Activated CD4-positive, alpha-beta T cell treated with anti-CD3 and anti-CD28 coated beads for 36 hours (primary cell): ENCODE measurements at regions of chrX and their contacts with region 1.

Region 1: GRCh38 chrX:54182864-54183608 is at the start of gene FAM120C:
- DNase-seq: peak; percentile 80
- ATAC-seq: peak; percentile 73
- H3K4me3 Mint-ChIP-seq: peak within 1 kb of the TSS; percentile 81
- H3K27ac Mint-ChIP-seq: peak within 1 kb of the TSS; percentile 87
- H3K4me1 Mint-ChIP-seq: peaks cover 39% of the 10 kb centered on the region
- H3K27me3 Mint-ChIP-seq: no peaks in the 10 kb centered on the region
- total RNA-seq, gene FAM120C: 6.6 to 8.3 TPM

Region 2: GRCh38 chrX:53422086-53422860 is 760.8 kb before region 1 on chrX and contains the start of gene SMC1A:
- CTCF ChIA-PET with region 1: no interaction called
- POLR2A ChIA-PET with region 1: interaction called, 3 read pairs
- intact Hi-C with region 1: loop called in 1 of 2 experiments (anchors 5 kb)
- DNase-seq: peak; percentile 96
- ATAC-seq: peak; percentile 91
- H3K4me3 Mint-ChIP-seq: peak within 1 kb of the TSS; percentile 94
- H3K27ac Mint-ChIP-seq: peak within 1 kb of the TSS; percentile 97
- H3K4me1 Mint-ChIP-seq: peaks cover 27% of the 10 kb centered on the region
- H3K27me3 Mint-ChIP-seq: no peaks in the 10 kb centered on the region
- total RNA-seq, gene SMC1A: 155 to 190 TPM

Region 3: GRCh38 chrX:53714580-53715345 is 468.3 kb before region 1 on chrX:
- CTCF ChIA-PET with region 1: no interaction called
- POLR2A ChIA-PET with region 1: interaction called, 3 read pairs
- intact Hi-C with region 1: loop called in 1 of 2 experiments (anchors 10 kb)
- DNase-seq: peak; percentile 77
- ATAC-seq: peak; percentile 74
- H3K4me3 Mint-ChIP-seq: peak overlapping the region; percentile 86
- H3K27ac Mint-ChIP-seq: peak overlapping the region; percentile 96
- H3K4me1 Mint-ChIP-seq: peaks cover 37% of the 10 kb centered on the region
- H3K27me3 Mint-ChIP-seq: no peaks in the 10 kb centered on the region

Region 4: DNA sequence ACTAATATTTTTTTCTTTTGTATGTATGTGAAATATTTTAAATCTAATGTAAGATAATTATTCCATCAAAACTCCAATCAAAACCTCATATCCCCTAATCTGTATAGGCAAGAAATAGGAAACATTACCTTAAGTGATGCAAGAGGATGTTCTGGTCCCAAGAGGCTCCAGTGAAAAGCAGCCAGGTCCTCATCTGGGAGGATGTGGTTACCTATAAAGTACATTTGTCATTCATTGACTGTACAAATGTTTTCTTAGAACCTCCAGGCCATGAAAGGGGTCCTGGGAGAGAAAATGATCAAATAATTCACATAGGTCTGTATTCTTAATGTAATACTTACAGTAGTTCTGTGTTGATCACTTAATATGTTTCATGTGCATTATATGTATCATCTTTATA is 25.5 kb before region 1 on chrX:
- CTCF ChIA-PET with region 1: no interaction called
- POLR2A ChIA-PET with region 1: no interaction called
- intact Hi-C with region 1: no loop called
- DNase-seq: no peak
- ATAC-seq: no peak
- H3K4me3 Mint-ChIP-seq: no peak overlapping the region
- H3K27ac Mint-ChIP-seq: no peak overlapping the region
- H3K4me1 Mint-ChIP-seq: no peaks in the 10 kb centered on the region
- H3K27me3 Mint-ChIP-seq: no peaks in the 10 kb centered on the region

Region 5: GRCh38 chrX:54439967-54440871 is 257.2 kb after region 1 on chrX and contains the start of gene TSR2:
- CTCF ChIA-PET with region 1: no interaction called
- POLR2A ChIA-PET with region 1: no interaction called
- intact Hi-C with region 1: loop called in 1 of 2 experiments (anchors 1 kb)
- DNase-seq: peak; percentile 88
- ATAC-seq: peak; percentile 96
- H3K4me3 Mint-ChIP-seq: peak within 1 kb of the TSS; percentile 88
- H3K27ac Mint-ChIP-seq: peak within 1 kb of the TSS; percentile 83
- H3K4me1 Mint-ChIP-seq: peaks cover 18% of the 10 kb centered on the region
- H3K27me3 Mint-ChIP-seq: no peaks in the 10 kb centered on the region
- total RNA-seq, gene TSR2: 31.0 to 34.1 TPM

Region 6: DNA sequence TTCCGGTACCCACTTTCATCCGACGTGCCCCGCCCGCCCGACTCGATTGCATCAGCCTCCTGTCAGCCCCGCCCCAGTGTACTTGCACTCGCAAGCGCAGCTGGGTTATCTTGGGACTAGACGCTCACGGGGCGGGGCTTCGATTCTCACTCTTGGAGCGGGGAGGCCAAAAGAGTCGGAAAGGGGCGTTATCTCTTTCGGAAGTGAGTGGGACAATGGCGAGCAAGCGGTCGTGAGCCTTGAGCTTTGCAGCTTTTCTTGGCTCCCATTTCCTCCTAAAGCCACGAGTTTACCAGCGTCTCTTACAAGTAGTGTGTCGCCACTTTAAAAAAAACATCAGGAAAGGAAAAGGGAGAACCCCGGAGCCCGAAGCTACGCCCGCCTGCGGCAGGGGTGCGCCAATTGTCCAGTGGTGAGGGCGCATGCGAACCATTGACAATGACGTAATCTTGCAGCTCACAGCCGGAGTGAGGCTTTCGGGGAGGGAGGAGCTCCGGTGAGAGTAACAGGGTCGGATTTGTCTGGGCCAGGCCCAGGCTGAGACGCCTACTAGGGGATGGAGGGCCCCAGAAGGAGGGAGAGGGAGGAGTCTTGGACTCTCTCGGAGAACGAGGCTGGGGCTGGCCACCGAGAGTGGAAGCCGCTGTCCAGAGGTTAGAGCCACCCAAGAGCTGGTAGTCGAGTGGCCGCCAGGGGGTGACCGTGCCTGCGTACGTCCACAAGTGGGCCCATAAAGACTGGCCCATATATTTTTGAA is 456.5 kb after region 1 on chrX:
- CTCF ChIA-PET with region 1: no interaction called
- POLR2A ChIA-PET with region 1: no interaction called
- intact Hi-C with region 1: loop called in 1 of 2 experiments (anchors 1 kb)
- DNase-seq: peak; percentile 96
- ATAC-seq: peak; percentile 93
- H3K4me3 Mint-ChIP-seq: peak overlapping the region; percentile 84
- H3K27ac Mint-ChIP-seq: peak overlapping the region; percentile 92
- H3K4me1 Mint-ChIP-seq: peaks cover 6% of the 10 kb centered on the region
- H3K27me3 Mint-ChIP-seq: no peaks in the 10 kb centered on the region

Region 7: DNA sequence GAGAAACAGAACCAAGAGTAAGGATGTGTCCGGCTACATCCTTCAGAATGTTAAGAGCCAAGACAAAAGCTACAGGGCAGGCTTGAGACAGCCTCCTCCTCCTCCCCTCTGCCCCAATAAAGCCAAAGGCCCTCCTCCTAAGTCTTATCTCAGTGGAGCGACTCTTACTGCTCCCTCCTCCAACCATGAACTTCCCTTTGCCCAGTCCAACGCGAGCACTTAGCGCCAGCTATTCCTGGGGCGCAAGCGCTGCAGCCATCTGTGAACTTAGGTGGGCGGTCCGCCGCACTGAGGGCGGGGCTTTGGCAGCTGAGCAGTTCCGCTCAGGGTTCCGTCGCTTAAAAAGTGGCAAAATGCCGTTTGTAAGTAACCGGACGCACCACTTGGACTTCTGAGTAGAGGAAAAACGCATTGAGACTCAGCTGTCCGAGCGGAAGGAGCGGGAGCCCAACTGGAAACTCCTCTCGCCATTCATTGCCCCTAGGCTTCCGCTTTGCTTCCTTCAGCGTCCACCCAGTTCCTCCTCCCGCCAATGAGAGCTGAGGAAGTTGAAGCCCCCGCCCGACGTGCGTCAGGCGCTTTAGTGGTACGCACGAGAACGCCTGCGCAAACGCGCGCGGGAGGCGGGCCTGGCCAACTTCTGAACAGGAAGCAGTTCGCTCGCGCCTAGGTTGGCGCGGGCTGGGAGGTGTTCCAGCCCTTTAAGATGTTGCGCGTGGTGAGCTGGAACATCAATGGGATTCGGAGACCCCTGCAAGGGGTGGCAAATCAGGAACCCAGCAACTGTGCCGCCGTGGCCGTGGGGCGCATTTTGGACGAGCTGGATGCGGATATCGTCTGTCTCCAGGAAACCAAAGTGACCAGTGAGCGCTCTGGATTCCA is 816.9 kb after region 1 on chrX and contains the start of gene APEX2:
- CTCF ChIA-PET with region 1: no interaction called
- POLR2A ChIA-PET with region 1: no interaction called
- intact Hi-C with region 1: loop called in 1 of 2 experiments (anchors 1 kb)
- DNase-seq: peak; percentile 92
- ATAC-seq: peak; percentile 96
- H3K4me3 Mint-ChIP-seq: peak within 1 kb of the TSS; percentile 94
- H3K27ac Mint-ChIP-seq: peak within 1 kb of the TSS; percentile 94
- H3K4me1 Mint-ChIP-seq: peaks cover 21% of the 10 kb centered on the region
- H3K27me3 Mint-ChIP-seq: no peaks in the 10 kb centered on the region
- total RNA-seq, gene APEX2: 37.7 to 41.4 TPM